ENCODE measurements at regions of chr6 and their contacts with region 1.

Region 1: DNA sequence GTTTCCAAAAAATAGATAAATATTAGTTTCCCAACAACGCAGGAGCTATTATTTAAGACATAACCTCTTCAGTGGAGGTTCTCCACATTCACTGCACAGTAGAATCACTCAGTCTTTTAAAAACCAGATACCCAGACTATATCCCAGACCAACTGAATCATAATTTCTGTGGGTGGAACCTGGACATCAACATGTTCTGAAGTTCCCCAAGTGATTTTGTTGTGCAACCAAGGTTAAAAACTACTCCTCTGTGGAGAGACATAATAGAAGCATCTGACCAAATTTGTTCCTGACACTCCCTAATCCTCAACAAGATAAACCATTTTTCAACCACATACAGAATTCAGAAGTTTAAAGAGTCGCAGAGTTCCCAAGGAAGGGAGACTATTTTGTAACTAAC is 42.3 kb downstream of the STK38 start:
- DNase-seq: peak; percentile 63
- H3K4me3 ChIP-seq: no peak overlapping the region
- H3K27ac ChIP-seq: no peak overlapping the region
- H3K4me1 ChIP-seq: no peaks in the 10 kb centered on the region
- H3K27me3 ChIP-seq: no peaks in the 10 kb centered on the region
- CTCF ChIP-seq: no peak

Region 2: DNA sequence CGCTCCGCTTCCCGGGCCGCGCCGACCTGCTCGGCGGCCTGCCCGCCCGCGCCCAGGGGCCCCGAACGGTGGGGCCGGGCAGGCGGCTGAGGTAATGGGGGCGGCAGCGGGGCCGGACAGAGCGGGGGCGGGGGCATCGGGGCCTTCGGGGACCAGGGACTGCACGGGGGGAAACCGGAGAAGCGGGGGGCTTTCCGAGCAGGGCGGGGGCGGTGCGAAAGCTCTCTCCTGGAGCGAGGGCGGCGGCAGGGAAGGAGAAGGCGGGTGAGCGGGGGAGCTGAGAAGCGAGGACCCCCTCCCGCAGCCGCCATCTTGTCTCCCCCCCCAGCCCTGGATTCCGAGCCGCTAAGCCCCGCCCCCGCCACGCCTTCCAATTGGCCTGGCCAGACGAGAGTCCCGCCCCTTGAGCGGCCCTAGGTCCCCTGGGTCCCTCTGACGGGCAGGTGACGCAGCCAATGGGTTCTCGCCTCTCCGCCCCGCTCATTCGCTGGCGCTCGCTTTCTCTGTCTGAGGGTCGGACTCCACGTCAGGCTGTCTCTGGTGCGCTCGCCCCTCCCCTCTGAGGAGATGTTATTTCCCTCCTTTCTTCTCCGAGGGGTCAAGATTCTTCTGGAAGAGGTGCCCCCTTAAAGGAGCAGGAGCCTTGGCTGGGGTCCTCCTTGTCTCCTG is 308.0 kb before region 1 on chr6:
- CTCF ChIA-PET with region 1: no interaction called
- dilution Hi-C with region 1: no loop called
- in situ Hi-C with region 1: no loop called
- intact Hi-C with region 1: no loop called
- DNase-seq: peak; percentile 92
- H3K4me3 ChIP-seq: peak overlapping the region; percentile 57 to 84 (median 59)
- H3K27ac ChIP-seq: no peak overlapping the region
- H3K4me1 ChIP-seq: peaks cover 8% of the 10 kb centered on the region
- H3K27me3 ChIP-seq: no peaks in the 10 kb centered on the region
- CTCF ChIP-seq: no peak

Region 3: DNA sequence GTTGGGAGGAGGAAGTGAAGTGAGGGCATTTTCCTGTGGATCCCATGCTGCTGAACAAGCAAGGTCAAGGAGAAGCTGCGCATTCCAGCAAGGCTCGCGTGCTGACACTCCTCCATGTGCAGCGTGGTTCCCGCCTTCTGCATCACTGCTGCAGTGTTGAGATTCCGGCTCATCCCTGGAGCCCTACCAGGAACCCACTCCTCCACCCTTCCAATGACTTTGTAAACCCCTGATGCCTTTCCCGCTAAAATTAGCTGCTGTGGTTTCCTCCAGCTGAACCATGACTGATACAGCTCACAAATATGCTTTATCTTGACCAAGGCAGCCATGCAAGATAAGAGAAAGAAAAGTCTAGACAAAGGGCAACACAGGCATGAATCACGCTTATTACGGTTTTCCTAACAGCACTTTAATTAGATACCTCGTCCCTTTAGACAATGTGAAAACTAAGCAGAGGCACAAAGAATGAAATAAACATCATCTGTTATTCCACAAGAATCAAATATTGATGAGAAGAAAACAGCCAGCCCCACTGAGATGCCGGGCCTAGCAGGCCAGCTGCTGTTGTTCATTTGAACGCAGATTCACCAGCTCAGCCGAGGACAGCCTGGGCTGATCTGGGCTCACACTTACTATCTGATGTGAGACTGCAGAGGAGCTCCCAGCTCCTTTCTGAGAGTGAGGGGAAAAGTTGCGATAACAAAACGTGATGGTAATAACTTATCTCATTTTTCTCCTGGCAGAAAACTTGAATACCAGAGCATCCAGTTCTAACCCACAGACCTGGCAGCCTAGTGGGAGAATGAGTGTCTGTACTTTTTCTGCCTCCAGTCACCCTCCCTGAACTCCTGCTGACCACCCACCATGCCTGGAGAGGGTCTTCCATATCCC is 154.1 kb before region 1 on chr6:
- CTCF ChIA-PET with region 1: no interaction called
- dilution Hi-C with region 1: no loop called
- in situ Hi-C with region 1: no loop called
- intact Hi-C with region 1: no loop called
- DNase-seq: peak; percentile 9
- H3K4me3 ChIP-seq: no peak overlapping the region
- H3K27ac ChIP-seq: no peak overlapping the region
- H3K4me1 ChIP-seq: no peaks in the 10 kb centered on the region
- H3K27me3 ChIP-seq: no peaks in the 10 kb centered on the region
- CTCF ChIP-seq: no peak

Region 4: DNA sequence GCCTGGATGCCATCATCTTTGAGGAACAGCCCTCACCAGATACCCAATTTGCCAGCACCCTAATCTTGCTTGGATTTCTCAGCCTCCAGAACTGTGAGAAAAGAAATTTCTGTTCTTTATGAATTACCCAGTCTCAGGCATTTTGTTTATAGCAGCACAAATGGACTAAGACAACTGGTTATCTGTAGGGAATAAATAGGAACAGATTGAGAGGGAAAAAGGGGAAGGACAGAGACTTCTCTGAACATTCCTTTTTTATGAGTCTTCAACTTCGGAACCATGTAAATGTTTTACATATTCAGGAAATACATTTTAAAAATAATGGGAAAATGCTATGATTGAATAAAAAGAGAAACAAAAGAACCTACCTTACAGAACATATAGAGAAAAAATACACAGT is 41.3 kb before region 1 on chr6:
- CTCF ChIA-PET with region 1: no interaction called
- dilution Hi-C with region 1: loop called (anchors 5 kb)
- in situ Hi-C with region 1: no loop called
- intact Hi-C with region 1: no loop called
- DNase-seq: no peak
- H3K4me3 ChIP-seq: no peak overlapping the region
- H3K27ac ChIP-seq: no peak overlapping the region
- H3K4me1 ChIP-seq: no peaks in the 10 kb centered on the region
- H3K27me3 ChIP-seq: no peaks in the 10 kb centered on the region
- CTCF ChIP-seq: no peak

Measured in mammary epithelial cell (primary cell).